ENCODE measurements at regions of chrX and their contacts with region 1.

Region 1: DNA sequence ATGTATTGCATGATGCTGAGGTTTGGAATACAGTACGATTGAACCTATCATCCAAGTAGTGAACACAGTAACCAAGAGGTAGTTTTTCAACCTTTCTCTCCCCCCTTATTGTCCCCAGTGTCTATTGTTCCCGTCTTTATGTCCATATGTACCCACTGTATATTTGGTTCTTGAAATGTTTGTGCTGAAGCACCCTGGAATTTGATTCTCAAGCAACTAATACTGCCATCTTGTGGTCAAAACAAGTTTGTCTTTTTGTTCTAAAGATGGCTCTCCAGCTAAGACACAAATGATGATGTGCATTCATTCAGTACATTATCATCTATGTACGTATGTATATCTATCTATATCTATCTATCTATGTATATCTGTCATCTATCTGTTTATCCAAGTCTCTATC is 33.5 kb upstream of the DCX start:
- DNase-seq: peak; percentile 20
- ATAC-seq: no peak
- H3K4me3 ChIP-seq: no peak overlapping the region
- H3K27ac ChIP-seq: no peak overlapping the region
- H3K4me1 ChIP-seq: no peaks in the 10 kb centered on the region
- H3K27me3 ChIP-seq: no peaks in the 10 kb centered on the region; the same call in 1 of the 2 replicates
- CTCF ChIP-seq: peak; percentile 63; the same call in 1 of the 2 replicates

Region 2: DNA sequence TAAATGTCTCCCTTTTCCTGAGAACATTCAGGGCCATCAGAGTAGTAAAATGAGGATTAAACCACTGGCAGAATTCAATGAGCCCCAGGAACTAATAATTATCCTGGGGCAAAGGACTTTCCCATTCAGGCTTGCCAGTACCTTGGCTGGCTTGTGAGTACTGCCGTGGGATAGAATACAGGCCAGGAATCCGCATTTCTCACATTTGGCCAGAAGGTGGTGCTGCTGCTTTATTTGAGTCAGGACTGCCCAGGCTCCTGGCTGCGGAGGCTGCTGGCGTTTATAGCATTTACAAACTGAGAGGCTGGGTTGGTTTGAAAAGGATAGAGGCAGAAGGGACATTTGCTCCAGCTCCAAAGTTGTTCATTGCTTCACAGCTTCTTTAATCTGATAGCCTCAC is 995.4 kb before region 1 on chrX:
- CTCF ChIA-PET with region 1: no interaction called
- POLR2A ChIA-PET with region 1: no interaction called
- in situ Hi-C with region 1: no loop called
- intact Hi-C with region 1: loop called (anchors 10 kb)
- DNase-seq: peak; percentile 45
- ATAC-seq: peak; percentile 95
- H3K4me3 ChIP-seq: no peak overlapping the region
- H3K27ac ChIP-seq: no peak overlapping the region
- H3K4me1 ChIP-seq: no peaks in the 10 kb centered on the region
- H3K27me3 ChIP-seq: peaks cover 12% of the 10 kb centered on the region
- CTCF ChIP-seq: peak; percentile 81

Region 3: GRCh38 chrX:111168314-111168713 is 277.2 kb before region 1 on chrX:
- CTCF ChIA-PET with region 1: no interaction called
- POLR2A ChIA-PET with region 1: no interaction called
- in situ Hi-C with region 1: no loop called
- intact Hi-C with region 1: loop called (anchors 5 kb)
- DNase-seq: no peak
- ATAC-seq: no peak
- H3K4me3 ChIP-seq: no peak overlapping the region
- H3K27ac ChIP-seq: no peak overlapping the region
- H3K4me1 ChIP-seq: no peaks in the 10 kb centered on the region
- H3K27me3 ChIP-seq: no peaks in the 10 kb centered on the region
- CTCF ChIP-seq: peak; percentile 32; the same call in 1 of the 2 replicates

Region 4: DNA sequence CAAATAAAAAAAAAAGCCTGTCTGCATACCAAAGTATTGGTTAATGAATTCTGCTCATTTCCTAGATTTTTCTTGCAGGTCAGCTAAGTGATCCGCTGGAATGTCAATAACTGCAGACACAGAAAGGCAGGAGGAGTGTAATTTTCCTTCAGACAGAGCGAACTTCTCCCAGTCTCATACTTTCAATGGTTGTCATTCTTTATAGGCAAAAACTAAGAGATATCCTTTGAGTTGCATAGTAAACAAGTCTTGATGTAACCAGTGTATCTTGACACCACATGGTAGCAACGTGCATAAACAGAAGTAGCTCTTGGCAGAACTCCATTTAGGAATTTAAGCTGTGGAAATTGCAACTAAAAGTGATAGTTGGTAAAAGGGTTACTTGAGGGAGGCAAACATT is 183.4 kb before region 1 on chrX:
- CTCF ChIA-PET with region 1: no interaction called
- POLR2A ChIA-PET with region 1: no interaction called
- in situ Hi-C with region 1: no loop called
- intact Hi-C with region 1: loop called (anchors 10 kb)
- DNase-seq: no peak
- ATAC-seq: no peak
- H3K4me3 ChIP-seq: no peak overlapping the region
- H3K27ac ChIP-seq: no peak overlapping the region
- H3K4me1 ChIP-seq: no peaks in the 10 kb centered on the region
- H3K27me3 ChIP-seq: peaks cover 2% of the 10 kb centered on the region; the same call in 1 of the 2 replicates
- CTCF ChIP-seq: no peak

Region 5: GRCh38 chrX:111652719-111653118 is 207.2 kb after region 1 on chrX:
- CTCF ChIA-PET with region 1: no interaction called
- POLR2A ChIA-PET with region 1: no interaction called
- in situ Hi-C with region 1: no loop called
- intact Hi-C with region 1: loop called (anchors 10 kb)
- DNase-seq: no peak
- ATAC-seq: no peak
- H3K4me3 ChIP-seq: no peak overlapping the region
- H3K27ac ChIP-seq: no peak overlapping the region
- H3K4me1 ChIP-seq: no peaks in the 10 kb centered on the region
- H3K27me3 ChIP-seq: no peaks in the 10 kb centered on the region
- CTCF ChIP-seq: peak; percentile 17; the same call in 1 of the 2 replicates

Measured in Panc1 (cell line).